ENCODE measurements at regions of chr2 and their contacts with region 1.

Region 1: DNA sequence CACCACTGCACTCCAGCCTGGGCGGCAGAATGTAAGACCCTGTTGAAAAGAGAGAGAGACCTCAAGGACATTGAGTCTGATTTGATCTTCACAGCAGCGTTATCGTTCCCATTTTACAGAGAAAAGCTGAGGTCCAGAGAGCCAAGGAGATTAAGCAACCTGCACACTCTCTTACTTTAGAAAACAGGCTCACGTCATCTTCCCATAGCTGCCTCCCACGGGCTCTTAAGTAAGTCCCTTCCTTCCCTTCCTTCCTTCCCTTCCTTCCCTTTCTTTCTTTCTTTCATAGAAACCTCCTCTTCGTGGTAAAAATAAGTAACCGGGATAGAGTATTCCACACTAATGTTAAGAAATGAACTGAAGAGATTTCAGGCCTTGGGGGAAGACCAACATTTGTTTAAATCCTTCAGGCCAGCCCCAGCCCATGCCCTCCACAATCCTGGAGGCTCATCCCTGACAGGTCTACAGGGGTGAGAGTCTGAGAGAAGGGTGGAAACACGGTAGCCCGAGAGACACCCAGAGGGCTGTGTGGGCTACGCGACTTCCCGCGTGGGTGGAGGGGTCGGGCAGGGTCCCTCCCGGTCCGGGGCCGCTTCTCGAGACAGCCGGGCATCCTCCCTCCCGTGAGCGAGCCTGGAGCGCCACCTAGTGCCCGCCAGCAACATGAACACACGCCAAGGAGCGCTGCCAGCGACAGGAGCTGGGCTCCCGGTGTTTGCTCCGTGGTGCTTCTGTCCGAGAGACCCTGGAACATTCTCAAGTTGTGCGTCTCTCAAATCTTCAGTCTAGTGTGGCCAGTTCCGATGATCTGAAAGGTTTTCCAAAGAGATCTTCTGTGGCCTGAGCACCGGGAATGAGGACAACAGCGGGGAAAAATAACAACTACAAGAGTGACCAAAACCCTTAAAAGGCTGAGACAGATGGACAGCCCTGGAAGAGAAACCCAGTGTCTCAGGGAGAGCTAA is 160.3 kb downstream of the INO80D start:
- DNase-seq: peak; percentile 60 to 68
- ATAC-seq: peak; percentile 93 to 99
- H3K4me3 ChIP-seq: peak overlapping the region; percentile 19; the same call in 1 of the 3 replicates
- H3K27ac ChIP-seq: peak overlapping the region in 1 of 2 experiments; percentile 61; a peak in 1 of 6 replicates
- H3K4me1 ChIP-seq: 0 out of 3 replicates have a peak, but pooled peaks cover 2% of the 10 kb centered on the region
- CTCF ChIP-seq: peak; percentile 93
- EP300 ChIP-seq: no peak
- POLR2A ChIP-seq: no peak
- RAD21 ChIP-seq: peak; percentile 92 to 98

Region 2: DNA sequence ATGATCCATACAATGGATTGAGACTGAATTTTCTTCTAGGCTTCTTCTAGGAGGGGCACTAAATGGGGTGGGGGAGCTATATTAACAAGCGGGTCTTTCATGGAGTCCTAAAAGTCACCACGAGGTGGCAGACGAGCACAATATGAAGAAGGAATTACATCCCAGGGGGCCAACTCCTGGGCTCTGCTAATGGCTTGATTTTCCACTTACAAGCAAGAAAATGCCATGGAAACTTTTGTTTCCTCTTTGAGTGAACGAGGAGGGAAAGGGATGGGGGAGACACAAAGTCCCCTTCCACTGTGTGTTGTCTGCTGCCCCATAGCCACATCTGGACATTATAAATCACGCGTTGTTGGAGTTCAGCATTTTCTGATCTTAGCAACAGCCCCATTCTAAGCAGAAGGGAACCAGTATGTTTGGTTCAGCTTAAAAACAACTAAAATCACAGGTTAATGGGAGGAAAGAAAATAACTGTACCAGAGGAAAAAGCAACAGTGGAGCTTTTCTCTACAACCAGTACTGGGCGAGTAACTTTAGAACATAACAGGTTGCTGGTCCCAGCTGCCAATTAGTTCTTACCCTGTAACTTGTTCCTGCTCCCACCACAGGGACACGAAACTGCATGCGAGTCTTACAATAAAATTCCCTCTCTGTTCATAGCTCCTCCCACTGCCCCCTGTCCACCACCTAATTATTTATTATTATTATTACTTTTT is 1665.3 kb before region 1 on chr2:
- CTCF ChIA-PET with region 1: interaction called, 37 read pairs
- POLR2A ChIA-PET with region 1: no interaction called
- DNase-seq: peak; percentile 63 to 70
- ATAC-seq: peak; percentile 77 to 97; a peak in 4 of 6 replicates
- H3K4me3 ChIP-seq: no peak overlapping the region
- H3K27ac ChIP-seq: no peak overlapping the region
- H3K4me1 ChIP-seq: no peaks in the 10 kb centered on the region
- CTCF ChIP-seq: peak; percentile 89
- EP300 ChIP-seq: no peak
- POLR2A ChIP-seq: no peak
- RAD21 ChIP-seq: peak; percentile 79 to 84

Region 3: GRCh38 chr2:205776139-205776538 is 149.5 kb before region 1 on chr2:
- CTCF ChIA-PET with region 1: interaction called, 14 read pairs
- POLR2A ChIA-PET with region 1: no interaction called
- DNase-seq: peak in 1 of 2 experiments; percentile 63
- ATAC-seq: peak; percentile 61 to 83; a peak in 3 of 6 replicates
- H3K4me3 ChIP-seq: no peak overlapping the region
- H3K27ac ChIP-seq: no peak overlapping the region
- H3K4me1 ChIP-seq: peaks cover 9% of the 10 kb centered on the region
- CTCF ChIP-seq: peak; percentile 69
- EP300 ChIP-seq: no peak
- POLR2A ChIP-seq: no peak
- RAD21 ChIP-seq: peak; percentile 61 to 66

Region 4: GRCh38 chr2:205908212-205909183 is 17.2 kb before region 1 on chr2:
- CTCF ChIA-PET with region 1: interaction called, 44 read pairs
- POLR2A ChIA-PET with region 1: no interaction called
- DNase-seq: no peak
- ATAC-seq: no peak
- H3K4me3 ChIP-seq: no peak overlapping the region
- H3K27ac ChIP-seq: no peak overlapping the region
- H3K4me1 ChIP-seq: no peaks in the 10 kb centered on the region
- CTCF ChIP-seq: no peak
- EP300 ChIP-seq: no peak
- POLR2A ChIP-seq: no peak
- RAD21 ChIP-seq: no peak

Region 5: DNA sequence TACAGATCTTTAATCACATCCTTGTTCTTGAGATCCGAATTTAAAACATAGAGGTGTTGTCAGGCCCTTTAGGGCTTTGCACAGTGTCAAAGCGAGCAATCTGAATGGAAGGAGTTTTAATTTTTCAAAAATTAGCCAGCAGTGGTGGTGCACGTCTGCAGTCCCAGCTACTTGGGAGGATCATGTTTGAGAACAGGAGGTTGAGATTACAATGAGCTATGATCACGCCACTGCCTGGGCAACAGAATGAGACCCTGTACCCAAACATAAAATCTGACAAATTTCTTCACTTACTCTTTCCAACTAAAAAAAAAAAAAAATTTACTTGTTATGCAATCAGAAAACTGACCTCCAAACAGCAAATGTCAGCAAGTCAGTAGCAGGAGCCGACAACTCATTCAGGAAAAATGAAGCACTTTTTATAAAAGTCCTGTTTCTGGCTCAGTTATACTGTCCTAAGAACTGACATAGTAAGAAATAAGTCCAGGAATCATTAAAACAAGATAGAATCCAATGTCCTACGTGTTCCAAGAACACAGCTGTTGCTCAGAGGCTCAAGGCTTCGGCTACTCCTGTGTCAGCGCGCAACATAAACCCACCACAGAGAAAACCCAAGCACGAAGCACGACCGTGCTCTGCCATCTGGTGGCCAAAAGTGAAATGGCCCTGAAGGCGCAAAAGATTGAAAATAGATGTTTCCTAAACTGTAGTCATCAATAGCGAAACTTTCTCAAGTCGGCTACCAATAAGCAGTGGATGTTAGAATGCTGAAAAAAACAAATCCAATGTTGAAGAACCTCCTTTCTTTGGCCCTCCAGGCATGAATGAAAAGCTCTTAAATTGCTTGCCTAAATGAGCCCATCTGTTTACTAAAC is 22.2 kb after region 1 on chr2:
- CTCF ChIA-PET with region 1: interaction called, 18 read pairs
- POLR2A ChIA-PET with region 1: no interaction called
- DNase-seq: peak; percentile 54 to 60
- ATAC-seq: peak; percentile 73 to 89
- H3K4me3 ChIP-seq: no peak overlapping the region
- H3K27ac ChIP-seq: no peak overlapping the region
- H3K4me1 ChIP-seq: peaks cover 17% of the 10 kb centered on the region
- CTCF ChIP-seq: peak; percentile 90
- EP300 ChIP-seq: no peak
- POLR2A ChIP-seq: no peak
- RAD21 ChIP-seq: peak; percentile 84 to 85

Region 6: GRCh38 chr2:206020171-206020570 is 94.5 kb after region 1 on chr2:
- CTCF ChIA-PET with region 1: no interaction called
- POLR2A ChIA-PET with region 1: no interaction called
- DNase-seq: no peak
- ATAC-seq: no peak
- H3K4me3 ChIP-seq: no peak overlapping the region
- H3K27ac ChIP-seq: no peak overlapping the region
- H3K4me1 ChIP-seq: no peaks in the 10 kb centered on the region
- CTCF ChIP-seq: no peak
- EP300 ChIP-seq: no peak
- POLR2A ChIP-seq: no peak
- RAD21 ChIP-seq: no peak

Measured in A549 (cell line).